Colonic mucosa (tissue), 4 donors: ENCODE measurements at regions of chr7 and their contacts with region 1.

Region 1: GRCh38 chr7:48872548-48872947 is 51.8 kb upstream of the CDC14C start:
- DNase-seq: no peak
- H3K4me3 ChIP-seq: no peak overlapping the region
- H3K27ac ChIP-seq: no peak overlapping the region
- H3K4me1 ChIP-seq: no peaks in the 10 kb centered on the region
- H3K27me3 ChIP-seq: no peaks in the 10 kb centered on the region
- CTCF ChIP-seq: no peak

Region 2: GRCh38 chr7:48424731-48425130 is 447.8 kb before region 1 on chr7:
- intact Hi-C with region 1: loop called (anchors 5 kb)
- DNase-seq: no peak
- H3K4me3 ChIP-seq: no peak overlapping the region
- H3K27ac ChIP-seq: no peak overlapping the region
- H3K4me1 ChIP-seq: peaks cover 3% of the 10 kb centered on the region
- H3K27me3 ChIP-seq: no peaks in the 10 kb centered on the region
- CTCF ChIP-seq: peak; percentile 35

Region 3: DNA sequence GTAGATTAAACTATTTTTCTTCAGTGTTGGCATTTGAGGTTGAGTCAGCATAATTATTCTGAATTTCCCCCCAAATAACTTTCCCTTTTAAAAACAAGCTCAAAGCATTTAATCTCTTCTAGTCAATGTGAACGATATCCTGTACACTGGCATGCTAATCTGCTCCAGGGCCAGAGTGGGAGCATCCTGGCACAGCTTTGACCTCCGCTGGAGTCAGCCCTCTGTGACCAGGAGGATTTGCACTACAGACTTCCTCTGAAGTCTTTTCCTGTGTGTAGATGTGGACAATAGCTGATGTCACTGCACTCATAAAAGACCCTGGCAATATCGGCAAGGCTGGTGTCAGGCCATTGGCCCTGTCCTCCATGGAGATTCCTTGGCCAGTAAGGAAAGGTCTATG is 392.0 kb after region 1 on chr7:
- intact Hi-C with region 1: no loop called
- DNase-seq: no peak
- H3K4me3 ChIP-seq: no peak overlapping the region
- H3K27ac ChIP-seq: no peak overlapping the region
- H3K4me1 ChIP-seq: no peaks in the 10 kb centered on the region
- H3K27me3 ChIP-seq: no peaks in the 10 kb centered on the region
- CTCF ChIP-seq: no peak